ENCODE measurements at regions of chr9 and their contacts with region 1.

Region 1: DNA sequence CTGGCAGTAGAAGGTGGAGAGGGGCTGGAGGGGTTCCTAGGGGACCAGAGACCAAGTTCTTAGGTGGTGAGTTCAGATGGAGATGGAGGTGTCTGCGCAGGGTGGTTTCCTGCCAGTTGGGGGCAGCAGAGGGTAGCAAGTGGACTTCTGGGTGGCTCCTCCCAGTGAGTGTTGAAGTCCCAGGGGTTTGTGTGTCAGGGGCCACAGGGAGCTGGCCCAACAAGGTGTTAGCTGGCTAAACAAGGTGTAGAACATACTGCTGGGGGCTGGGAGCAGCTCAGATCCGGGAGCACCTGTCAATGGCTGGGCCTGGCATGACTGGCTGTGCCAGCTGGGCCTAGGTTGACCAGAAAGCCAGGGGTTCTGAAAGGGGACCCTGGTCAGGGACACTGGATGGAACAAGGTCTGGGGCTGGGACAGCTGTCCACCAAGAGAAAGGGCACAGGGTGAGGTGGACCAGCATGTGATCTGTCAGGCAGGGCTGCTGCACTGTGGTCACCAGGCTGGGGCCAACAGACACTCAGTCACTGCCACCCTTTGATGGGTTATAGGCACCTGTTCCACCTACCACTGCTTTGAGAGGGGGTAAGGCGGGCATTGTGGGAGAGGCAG is 35.6 kb downstream of the DAB2IP start:
- DNase-seq: peak; percentile 53
- H3K4me3 Mint-ChIP-seq: no peak overlapping the region
- H3K27ac Mint-ChIP-seq: no peak overlapping the region
- H3K4me1 Mint-ChIP-seq: no peaks in the 10 kb centered on the region
- H3K27me3 Mint-ChIP-seq: peaks cover 10% of the 10 kb centered on the region

Region 2: DNA sequence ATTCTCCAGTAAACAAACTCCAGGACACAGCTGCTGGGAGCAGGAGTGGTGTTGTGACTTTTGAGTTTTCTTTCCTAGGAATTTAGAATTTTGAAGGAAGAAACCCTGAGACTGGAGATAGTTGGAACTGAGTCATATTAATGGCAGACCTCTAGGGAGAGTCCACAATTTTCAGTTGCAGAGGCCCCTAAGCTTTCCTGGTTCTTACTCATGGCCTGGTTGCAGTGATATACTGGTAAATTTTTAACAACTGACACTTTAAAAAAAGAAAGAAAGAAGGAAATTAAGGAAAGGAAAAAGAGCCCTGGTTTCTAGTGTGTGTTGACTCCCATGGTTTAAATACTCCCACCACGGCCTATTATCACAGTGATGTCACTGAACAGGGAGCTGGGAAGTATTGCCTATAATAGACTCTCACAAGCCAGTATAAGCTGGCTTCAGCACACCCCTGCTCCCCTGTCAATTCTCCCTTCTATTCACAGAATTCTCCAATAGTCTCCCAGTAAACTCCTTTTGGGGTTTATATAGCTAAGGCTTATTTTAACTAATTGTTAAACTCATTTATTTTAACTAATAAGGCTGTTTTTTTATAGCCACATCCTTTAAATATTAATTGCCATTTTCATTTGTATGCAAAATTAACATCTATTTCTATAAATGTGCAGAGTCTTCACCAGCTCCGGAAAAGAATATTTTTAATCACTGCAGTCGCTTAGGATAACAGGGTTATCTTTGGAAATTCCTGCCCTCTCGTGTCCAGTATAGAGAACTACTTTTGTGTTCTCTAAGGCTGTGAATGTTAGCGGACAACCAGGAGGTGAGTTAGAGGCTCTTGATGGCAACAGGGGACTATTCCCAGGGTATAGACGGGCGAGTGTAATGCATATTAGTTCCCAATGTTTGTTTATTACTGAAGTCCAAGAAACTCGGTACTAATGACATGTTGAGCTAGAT is 247.0 kb before region 1 on chr9:
- intact Hi-C with region 1: loop called (anchors 10 kb)
- DNase-seq: no peak
- H3K4me3 Mint-ChIP-seq: no peak overlapping the region
- H3K27ac Mint-ChIP-seq: no peak overlapping the region
- H3K4me1 Mint-ChIP-seq: no peaks in the 10 kb centered on the region
- H3K27me3 Mint-ChIP-seq: peaks cover 27% of the 10 kb centered on the region

Region 3: DNA sequence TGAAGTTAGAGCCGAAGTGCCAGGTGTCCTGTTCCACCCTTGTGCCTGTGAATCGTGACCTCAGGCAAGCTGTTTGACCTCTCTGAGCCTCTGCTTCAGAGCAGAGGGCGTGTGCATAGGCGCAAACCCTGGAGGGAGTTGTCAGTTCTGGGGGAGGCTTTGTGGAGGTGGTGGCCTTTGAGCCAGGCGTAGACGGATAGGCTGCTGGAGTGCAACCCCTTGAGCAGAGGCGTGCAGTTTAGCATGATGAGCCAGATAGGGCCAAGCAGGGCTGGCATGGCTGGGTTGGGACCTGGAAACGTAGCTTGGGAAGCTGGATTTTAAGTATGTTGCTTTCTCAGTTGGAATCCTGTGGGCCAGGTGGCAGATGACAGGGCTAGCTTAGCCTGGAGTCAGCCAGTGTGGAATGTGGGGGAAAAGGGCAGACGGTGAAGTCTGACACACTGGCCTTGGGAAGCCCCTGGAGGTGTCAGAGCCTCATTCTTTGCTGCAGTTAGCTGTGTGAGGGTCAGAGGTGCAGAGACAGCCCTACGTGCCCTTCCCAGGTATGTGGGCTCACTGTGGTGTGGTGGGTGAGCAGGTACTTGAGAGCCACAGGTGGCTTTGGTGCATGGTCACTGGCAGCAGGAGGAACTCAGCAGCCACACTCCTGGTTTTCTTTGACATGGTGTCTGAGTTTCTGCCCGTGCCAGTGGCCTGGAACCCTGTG is 57.8 kb after region 1 on chr9:
- intact Hi-C with region 1: no loop called
- DNase-seq: no peak
- H3K4me3 Mint-ChIP-seq: no peak overlapping the region
- H3K27ac Mint-ChIP-seq: no peak overlapping the region
- H3K4me1 Mint-ChIP-seq: peaks cover 13% of the 10 kb centered on the region
- H3K27me3 Mint-ChIP-seq: no peaks in the 10 kb centered on the region

Measured in activated T-helper 1 cell treated with anti-CD3 and anti-CD28 coated beads, Interleukin-12 subunit alpha, Interleukin-12 subunit beta, Interleukin-2, Interleukin-4 antibody, amounts not matched to agents 30 ng/mL and 10 ng/mL and 1 ng/mL, durations not matched to agents 14 hours and 24 hours and 36 hours (primary cell).